ENCODE measurements at regions of chr12 and their contacts with region 1.

Region 1: GRCh38 chr12:31682136-31682962 is 22.9 kb downstream of the ETFBKMT start:
- H3K4me3 Mint-ChIP-seq: no peak overlapping the region
- H3K27ac Mint-ChIP-seq: peak overlapping the region; percentile 70
- H3K4me1 Mint-ChIP-seq: peaks cover 23% of the 10 kb centered on the region
- H3K27me3 Mint-ChIP-seq: no peaks in the 10 kb centered on the region

Region 2: GRCh38 chr12:31663576-31663975 is 18.8 kb before region 1 on chr12:
- intact Hi-C with region 1: no loop called
- H3K4me3 Mint-ChIP-seq: no peak overlapping the region
- H3K27ac Mint-ChIP-seq: no peak overlapping the region
- H3K4me1 Mint-ChIP-seq: peaks cover 15% of the 10 kb centered on the region
- H3K27me3 Mint-ChIP-seq: no peaks in the 10 kb centered on the region

Region 3: DNA sequence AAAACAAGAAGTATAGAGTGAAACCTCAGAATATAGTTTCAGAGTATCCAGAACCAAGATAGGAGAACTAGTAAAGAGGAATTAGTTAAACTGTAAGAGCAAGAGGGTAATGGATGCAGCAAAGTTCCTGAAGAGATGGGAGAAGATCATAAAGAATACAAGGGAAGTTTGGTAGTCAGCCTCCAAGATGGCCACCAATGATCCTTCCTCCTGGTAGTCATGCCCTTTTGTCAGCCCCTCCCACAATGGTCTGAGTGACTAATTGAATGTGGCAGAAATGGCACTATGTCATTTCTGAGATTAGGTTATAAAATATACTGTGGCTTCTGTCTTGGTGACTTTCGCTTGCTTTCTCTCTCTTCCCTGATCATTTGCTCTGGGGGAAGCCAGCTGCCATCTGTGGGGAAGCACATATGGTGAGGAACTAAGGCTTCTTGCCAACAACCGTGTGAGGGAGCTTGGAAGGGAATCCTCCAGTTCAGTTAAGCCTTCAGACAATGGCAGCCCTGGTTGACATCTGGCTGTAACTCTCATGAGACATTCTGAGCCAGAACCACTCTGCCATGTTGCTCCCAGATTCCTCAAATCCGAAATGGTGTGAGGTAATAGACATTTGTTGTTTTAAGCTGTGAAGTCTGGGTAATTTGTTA is 101.8 kb after region 1 on chr12:
- intact Hi-C with region 1: loop called (anchors 10 kb)
- H3K4me3 Mint-ChIP-seq: no peak overlapping the region
- H3K27ac Mint-ChIP-seq: peak overlapping the region; percentile 71
- H3K4me1 Mint-ChIP-seq: peaks cover 14% of the 10 kb centered on the region
- H3K27me3 Mint-ChIP-seq: no peaks in the 10 kb centered on the region

Region 4: GRCh38 chr12:31959161-31959700 is 276.9 kb after region 1 on chr12 and contains the start of gene RESF1:
- intact Hi-C with region 1: loop called (anchors 2 kb)
- H3K4me3 Mint-ChIP-seq: peak within 1 kb of the TSS; percentile 92
- H3K27ac Mint-ChIP-seq: peak within 1 kb of the TSS; percentile 98
- H3K4me1 Mint-ChIP-seq: peaks cover 46% of the 10 kb centered on the region
- H3K27me3 Mint-ChIP-seq: no peaks in the 10 kb centered on the region

Region 5: DNA sequence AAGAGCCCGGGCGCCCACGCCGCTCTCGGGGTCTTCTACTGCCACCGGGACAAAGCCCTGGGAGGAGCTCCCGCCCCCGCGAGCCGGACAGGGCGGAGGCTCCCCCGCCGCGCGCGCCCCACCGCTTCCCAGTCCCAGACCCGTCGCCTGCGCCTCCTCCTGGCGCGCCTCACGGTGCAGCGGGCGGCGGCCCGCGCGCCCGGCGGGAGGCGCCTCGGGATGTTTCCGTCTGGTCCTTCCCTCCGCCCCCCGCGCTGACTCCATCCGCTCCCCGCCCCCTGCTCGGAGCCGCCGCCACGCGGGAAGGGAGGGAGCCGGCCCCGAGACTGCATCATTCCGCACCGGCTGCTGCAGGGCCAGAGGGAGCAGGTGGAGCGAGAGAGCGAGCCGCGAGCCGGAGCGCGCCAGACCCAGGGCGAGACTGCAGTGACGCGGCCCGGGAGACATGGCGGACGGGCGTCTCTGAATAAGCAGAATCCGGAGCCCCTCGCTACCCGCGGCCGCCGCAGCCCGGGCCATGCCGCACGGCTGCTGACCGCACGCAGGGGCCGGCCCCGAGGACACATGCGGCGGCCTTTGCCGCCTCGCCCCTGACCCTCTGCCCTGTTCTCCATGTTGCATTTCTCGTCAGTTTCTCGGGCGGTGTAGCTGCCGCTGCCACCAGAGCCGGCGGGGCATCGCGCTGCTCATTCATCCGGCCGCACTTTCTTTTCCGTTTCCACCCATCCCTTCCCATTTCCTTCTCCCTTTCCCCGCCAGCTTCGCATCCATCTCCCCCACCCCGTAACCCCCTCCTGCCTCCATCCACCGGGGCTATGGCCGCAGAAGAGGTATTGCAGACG is 424.4 kb after region 1 on chr12 and contains the start of gene BICD1:
- intact Hi-C with region 1: loop called (anchors 2 kb)
- H3K4me3 Mint-ChIP-seq: peak within 1 kb of the TSS; percentile 99
- H3K27ac Mint-ChIP-seq: peak within 1 kb of the TSS; percentile 83
- H3K4me1 Mint-ChIP-seq: peaks cover 20% of the 10 kb centered on the region
- H3K27me3 Mint-ChIP-seq: peaks cover 19% of the 10 kb centered on the region

Measured in dendritic cell treated with granulocyte-macrophage colony-stimulating factor and Interleukin-4, amounts not matched to agents 40 ng/mL and 50 ng/mL, for 4 days (primary cell).